HAP-1 (cell line): ENCODE measurements at regions of chr2 and their contacts with region 1.

Region 1: DNA sequence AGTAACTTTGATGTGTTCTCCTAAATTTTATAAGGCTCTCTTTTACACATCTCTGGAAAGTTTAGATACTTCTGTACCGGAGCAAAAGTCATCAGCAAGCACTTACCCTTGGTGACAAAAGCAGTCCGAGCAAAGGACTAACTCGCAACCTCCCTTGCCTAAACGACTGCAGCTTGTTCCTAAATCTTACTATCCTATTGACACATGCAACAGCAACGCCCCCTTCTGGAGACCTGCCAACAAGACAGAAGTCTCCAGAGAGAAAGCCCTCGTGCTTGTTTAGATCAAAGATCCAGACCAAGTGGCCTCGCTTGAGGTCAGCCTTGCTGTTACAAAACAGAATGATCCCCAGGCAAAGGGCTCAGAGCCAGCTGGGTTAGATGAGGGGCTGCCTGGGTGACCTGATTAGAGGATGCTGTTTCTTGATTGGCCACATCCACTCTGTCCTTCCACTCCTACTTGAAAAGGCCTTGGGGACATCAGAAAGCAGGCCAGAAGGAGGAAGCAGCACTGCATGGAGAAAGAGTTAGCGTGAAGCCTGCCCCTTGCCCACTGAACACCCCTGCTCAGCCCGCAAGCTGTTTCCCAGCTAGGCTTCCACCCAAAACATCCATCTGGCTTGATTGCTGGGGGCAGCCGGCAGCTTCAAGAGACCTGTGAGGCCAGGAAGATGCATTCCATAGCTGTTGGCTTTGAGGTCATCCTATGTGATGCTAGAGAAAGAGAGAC is 94.3 kb downstream of the HNRNPLL start:
- DNase-seq: peak; percentile 85 to 96
- H3K4me3 ChIP-seq: no peak overlapping the region
- H3K4me1 ChIP-seq: no peaks in the 10 kb centered on the region; the same call in 1 of the 2 replicates
- H3K27me3 ChIP-seq: no peaks in the 10 kb centered on the region

Region 2: GRCh38 chr2:38315707-38316333 is 192.7 kb before region 1 on chr2:
- in situ Hi-C with region 1: loop called (anchors 5 kb)
- DNase-seq: peak; percentile 48 to 74
- H3K4me3 ChIP-seq: no peak overlapping the region
- H3K4me1 ChIP-seq: no peaks in the 10 kb centered on the region
- H3K27me3 ChIP-seq: no peaks in the 10 kb centered on the region

Region 3: GRCh38 chr2:38370664-38371063 is 137.8 kb before region 1 on chr2:
- in situ Hi-C with region 1: no loop called
- DNase-seq: no peak
- H3K4me3 ChIP-seq: no peak overlapping the region
- H3K4me1 ChIP-seq: peaks cover 8% of the 10 kb centered on the region
- H3K27me3 ChIP-seq: no peaks in the 10 kb centered on the region